ENCODE measurements at regions of chr11 and their contacts with region 1.

Region 1: DNA sequence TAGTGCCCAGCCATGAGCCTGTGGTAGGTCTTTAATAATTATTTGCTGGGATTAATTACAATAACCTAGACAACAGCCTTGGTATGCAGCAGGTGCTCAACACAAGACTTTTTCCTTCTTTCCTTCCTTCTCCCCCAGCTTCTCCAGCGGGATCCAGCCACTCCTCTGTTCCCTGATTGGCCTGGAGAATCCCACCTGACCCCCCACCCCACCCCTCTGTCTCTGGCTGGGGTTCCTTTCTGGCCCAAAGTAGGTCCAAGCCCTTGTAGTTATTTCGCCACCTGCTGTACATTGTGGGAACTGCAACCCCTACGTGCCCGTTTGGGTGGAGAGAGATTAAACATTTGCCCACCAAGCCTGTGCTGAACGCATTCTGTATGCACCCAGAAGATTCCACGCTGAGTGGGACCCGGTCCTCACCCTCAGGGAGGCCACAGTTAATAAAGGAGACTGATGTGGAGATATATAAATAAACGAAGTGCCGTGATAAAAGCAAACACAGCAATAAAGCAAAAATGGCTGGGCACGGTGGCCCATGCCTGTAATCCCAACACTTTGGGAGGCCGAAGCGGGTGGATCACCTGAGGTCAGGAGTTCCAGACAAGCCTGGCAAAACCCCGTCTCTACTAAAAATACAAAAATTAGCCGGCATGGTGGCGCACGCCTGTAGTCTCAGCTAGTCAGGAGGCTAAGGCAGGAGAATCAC is 32.1 kb upstream of the DGKZ start:
- DNase-seq: peak; percentile 99
- H3K4me3 ChIP-seq: no peak overlapping the region
- H3K27ac ChIP-seq: no peak overlapping the region
- H3K4me1 ChIP-seq: no peaks in the 10 kb centered on the region
- H3K27me3 ChIP-seq: no peaks in the 10 kb centered on the region
- CTCF ChIP-seq: peak; percentile 100

Region 2: GRCh38 chr11:45885274-45885920 is 429.8 kb before region 1 on chr11 and contains the start of gene MAPK8IP1:
- CTCF ChIA-PET with region 1: no interaction called
- POLR2A ChIA-PET with region 1: no interaction called
- intact Hi-C with region 1: loop called (anchors 10 kb)
- DNase-seq: peak; percentile 75
- H3K4me3 ChIP-seq: peak within 1 kb of the TSS; percentile 58
- H3K27ac ChIP-seq: no peak within 1 kb of the TSS
- H3K4me1 ChIP-seq: peaks cover 15% of the 10 kb centered on the region
- H3K27me3 ChIP-seq: no peaks in the 10 kb centered on the region
- CTCF ChIP-seq: 0 out of 2 replicates have a peak, but pooled peaks have one; percentile 12
- total RNA-seq, gene MAPK8IP1: 46.0 and 46.2 TPM in 2 replicates

Region 3: DNA sequence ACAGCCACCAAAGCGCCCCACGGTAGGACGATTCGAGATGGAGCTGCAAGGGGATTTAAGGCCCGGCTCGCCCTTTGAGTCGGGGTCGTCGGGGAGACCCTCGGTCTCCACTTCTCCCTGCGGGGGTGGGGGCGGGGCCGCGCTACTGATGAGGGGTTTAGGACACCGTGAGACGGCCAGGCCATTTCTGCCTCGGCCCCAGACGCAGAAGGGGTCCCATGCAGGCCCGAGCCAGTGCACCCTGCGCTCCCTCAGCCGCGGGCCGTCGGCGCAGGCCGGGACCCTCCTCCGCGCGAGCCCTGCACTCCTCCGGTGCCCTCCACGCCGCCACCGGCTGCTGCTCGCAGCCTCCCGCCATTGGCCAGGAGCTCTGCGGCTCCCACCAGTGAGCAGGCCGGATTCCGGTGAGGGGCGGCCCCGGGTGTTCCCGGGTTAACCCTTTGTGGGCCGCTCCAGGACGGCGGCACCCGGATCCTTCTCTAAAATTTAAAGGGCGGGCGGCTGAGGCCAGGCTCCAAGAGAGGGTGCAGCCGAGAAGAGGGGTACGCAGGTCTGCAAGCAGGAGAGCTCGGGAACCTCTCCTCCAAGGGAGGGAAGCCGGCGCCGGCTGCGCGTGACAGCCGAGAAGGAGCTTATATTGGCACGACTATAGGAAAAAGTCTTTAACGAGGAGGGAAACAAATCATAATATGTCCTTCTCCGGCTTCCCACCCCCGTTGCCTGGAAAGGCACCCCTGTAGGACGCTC is 19.7 kb before region 1 on chr11:
- CTCF ChIA-PET with region 1: interaction called, 10 read pairs
- POLR2A ChIA-PET with region 1: interaction called, 3 read pairs
- intact Hi-C with region 1: no loop called
- DNase-seq: peak; percentile 97
- H3K4me3 ChIP-seq: peak overlapping the region; percentile 50
- H3K27ac ChIP-seq: peak overlapping the region; percentile 22
- H3K4me1 ChIP-seq: peaks cover 32% of the 10 kb centered on the region
- H3K27me3 ChIP-seq: no peaks in the 10 kb centered on the region
- CTCF ChIP-seq: no peak

Region 4: DNA sequence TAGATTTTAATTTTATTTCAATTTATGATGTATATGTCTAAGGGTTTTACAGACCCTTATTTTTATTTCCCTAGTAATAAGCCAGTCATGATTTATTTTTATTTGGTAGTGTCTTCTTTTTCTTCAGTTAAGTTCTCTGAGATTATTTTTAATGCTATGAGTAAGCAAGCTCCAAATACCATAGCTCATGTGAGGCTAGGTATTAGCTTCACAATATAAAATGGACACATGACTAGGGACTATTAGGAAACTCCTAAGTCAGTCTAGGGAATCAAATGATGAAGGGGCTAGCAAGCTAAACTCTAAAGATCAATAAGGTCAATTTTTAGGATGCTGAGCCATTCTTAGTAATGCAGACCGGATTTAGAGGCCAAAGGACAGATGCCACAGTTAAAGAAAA is 485.0 kb after region 1 on chr11:
- CTCF ChIA-PET with region 1: interaction called, 11 read pairs
- POLR2A ChIA-PET with region 1: no interaction called
- intact Hi-C with region 1: no loop called
- DNase-seq: no peak
- H3K4me3 ChIP-seq: no peak overlapping the region
- H3K27ac ChIP-seq: no peak overlapping the region
- H3K4me1 ChIP-seq: no peaks in the 10 kb centered on the region
- H3K27me3 ChIP-seq: no peaks in the 10 kb centered on the region
- CTCF ChIP-seq: no peak

Measured in A673 (cell line).